ENCODE measurements at regions of chr2 and their contacts with region 1.

Region 1: GRCh38 chr2:15577071-15577735 is 14.5 kb upstream of the DDX1 start:
- DNase-seq: peak; percentile 89
- ATAC-seq: peak; percentile 97
- H3K4me3 ChIP-seq: no peak overlapping the region
- H3K27ac ChIP-seq: no peak overlapping the region
- H3K4me1 ChIP-seq: peaks cover 6% of the 10 kb centered on the region; the same call in 1 of the 2 replicates
- H3K27me3 ChIP-seq: no peaks in the 10 kb centered on the region
- CTCF ChIP-seq: peak; percentile 92

Region 2: DNA sequence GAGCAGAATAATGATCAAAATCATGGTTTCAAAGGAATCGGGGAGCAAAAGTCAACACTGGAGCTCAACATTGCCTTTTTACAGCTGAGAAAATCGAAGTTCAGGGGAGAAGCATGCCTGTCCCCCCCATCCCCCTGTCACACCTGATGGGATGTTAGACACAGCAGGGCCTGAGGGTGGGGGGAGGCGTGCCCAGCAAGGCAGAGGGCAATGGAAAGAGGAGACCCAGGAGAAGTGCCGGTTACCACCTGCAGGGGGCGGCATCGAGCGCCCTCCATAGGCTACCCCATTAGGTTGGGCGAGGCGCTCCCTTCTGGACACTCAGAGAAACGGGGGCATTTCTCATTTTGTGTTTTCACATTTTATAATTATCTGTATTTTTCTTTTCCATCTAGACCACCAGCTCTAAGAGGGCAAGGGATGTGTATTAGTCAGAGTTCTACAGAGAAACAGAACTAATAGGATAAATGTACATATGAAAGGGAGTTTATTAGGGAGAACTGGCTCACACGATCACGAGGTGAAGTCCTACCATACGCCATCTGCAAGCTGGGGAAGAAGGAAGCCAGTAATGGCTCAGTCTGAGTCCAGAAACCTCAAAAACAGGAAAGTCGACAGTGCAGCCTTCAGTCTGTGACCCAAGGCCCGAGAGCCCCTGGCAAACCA is 673.4 kb before region 1 on chr2:
- CTCF ChIA-PET with region 1: no interaction called
- POLR2A ChIA-PET with region 1: no interaction called
- intact Hi-C with region 1: loop called (anchors 5 kb)
- DNase-seq: peak; percentile 79
- ATAC-seq: peak; percentile 82
- H3K4me3 ChIP-seq: no peak overlapping the region
- H3K27ac ChIP-seq: no peak overlapping the region
- H3K4me1 ChIP-seq: peaks cover 4% of the 10 kb centered on the region; the same call in 1 of the 2 replicates
- H3K27me3 ChIP-seq: no peaks in the 10 kb centered on the region
- CTCF ChIP-seq: peak; percentile 95

Region 3: DNA sequence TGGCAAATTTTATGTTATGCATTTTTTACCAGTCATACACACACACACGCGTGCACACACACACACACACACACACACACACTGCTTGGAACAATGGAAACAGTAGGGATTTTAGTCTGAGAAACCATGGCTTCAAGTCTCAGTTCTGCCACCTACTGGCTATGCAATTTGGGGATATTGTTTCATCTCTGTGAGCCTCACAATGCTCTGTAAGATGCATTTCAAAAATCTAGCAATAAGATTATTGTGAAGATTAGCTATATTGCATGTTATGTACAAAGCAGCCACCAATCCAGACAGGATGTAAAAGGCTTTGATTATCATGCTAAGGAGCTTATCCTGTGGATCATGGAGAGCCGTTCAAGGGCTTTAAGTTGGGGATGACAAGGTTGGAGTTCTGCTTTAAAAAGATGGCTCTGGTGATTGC is 417.4 kb before region 1 on chr2:
- CTCF ChIA-PET with region 1: no interaction called
- POLR2A ChIA-PET with region 1: no interaction called
- intact Hi-C with region 1: loop called (anchors 10 kb)
- DNase-seq: peak; percentile 75
- ATAC-seq: peak; percentile 65
- H3K4me3 ChIP-seq: no peak overlapping the region
- H3K27ac ChIP-seq: no peak overlapping the region
- H3K4me1 ChIP-seq: peaks cover 8% of the 10 kb centered on the region
- H3K27me3 ChIP-seq: no peaks in the 10 kb centered on the region
- CTCF ChIP-seq: peak; percentile 79

Region 4: GRCh38 chr2:15435474-15435873 is 141.7 kb before region 1 on chr2:
- CTCF ChIA-PET with region 1: interaction called, 3 read pairs
- POLR2A ChIA-PET with region 1: no interaction called
- intact Hi-C with region 1: loop called (anchors 1 kb)
- DNase-seq: no peak
- ATAC-seq: no peak
- H3K4me3 ChIP-seq: no peak overlapping the region
- H3K27ac ChIP-seq: no peak overlapping the region
- H3K4me1 ChIP-seq: no peaks in the 10 kb centered on the region
- H3K27me3 ChIP-seq: no peaks in the 10 kb centered on the region
- CTCF ChIP-seq: no peak

Region 5: DNA sequence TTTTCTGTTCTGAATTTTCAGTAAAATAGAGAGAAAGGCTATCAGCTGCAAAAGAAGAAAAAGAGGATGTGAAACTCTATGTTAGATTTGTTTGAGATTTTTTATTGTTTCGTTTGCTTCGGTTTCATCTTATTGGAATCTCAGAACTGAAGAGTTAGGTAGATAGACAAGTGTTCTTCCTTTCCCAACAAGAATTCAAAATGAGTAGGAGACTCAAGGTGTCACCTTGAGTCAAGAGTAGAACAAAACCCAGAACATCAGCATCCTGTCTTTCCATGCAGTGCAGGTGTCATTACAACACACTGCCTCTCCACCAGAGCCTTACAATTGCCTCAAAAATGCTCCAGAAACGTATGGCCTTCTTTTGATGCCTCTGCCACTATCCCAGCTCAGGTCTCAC is 37.2 kb before region 1 on chr2:
- CTCF ChIA-PET with region 1: no interaction called
- POLR2A ChIA-PET with region 1: no interaction called
- intact Hi-C with region 1: no loop called
- DNase-seq: no peak
- ATAC-seq: no peak
- H3K4me3 ChIP-seq: no peak overlapping the region
- H3K27ac ChIP-seq: no peak overlapping the region
- H3K4me1 ChIP-seq: no peaks in the 10 kb centered on the region
- H3K27me3 ChIP-seq: no peaks in the 10 kb centered on the region
- CTCF ChIP-seq: no peak

Region 6: DNA sequence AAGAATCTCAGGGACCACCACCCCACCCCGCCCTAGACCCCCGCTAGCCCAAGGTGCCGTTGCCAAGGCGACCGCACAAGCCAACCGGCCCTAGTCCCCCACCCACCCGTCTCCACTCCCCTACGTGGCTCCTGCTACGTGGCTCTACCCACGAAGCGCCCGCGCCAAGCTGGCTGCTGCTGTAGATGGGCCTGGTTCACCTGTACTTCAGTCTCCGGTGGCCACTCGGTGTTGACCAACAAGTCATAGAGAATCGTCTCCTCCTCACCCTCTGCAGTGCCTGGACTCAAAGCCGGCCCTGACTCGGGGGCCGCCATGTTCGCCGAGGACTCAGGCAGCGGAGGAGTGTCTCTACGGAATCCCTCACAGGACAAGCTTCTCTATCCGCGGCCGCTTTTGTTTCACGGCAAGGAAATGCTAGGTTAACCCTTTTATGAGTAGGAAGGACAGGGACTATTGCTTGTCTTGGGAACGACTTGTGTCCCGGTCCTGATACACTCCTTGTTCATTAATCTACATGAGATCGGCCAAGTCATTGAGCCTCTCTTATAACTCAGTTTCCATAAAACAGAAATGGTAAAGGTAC is 16.1 kb before region 1 on chr2 and contains the start of gene NBAS:
- CTCF ChIA-PET with region 1: interaction called, 14 read pairs
- POLR2A ChIA-PET with region 1: no interaction called
- intact Hi-C with region 1: no loop called
- DNase-seq: peak; percentile 86
- ATAC-seq: peak; percentile 75
- H3K4me3 ChIP-seq: peak within 1 kb of the TSS; percentile 98
- H3K27ac ChIP-seq: no peak within 1 kb of the TSS; the same call in 1 of the 2 replicates
- H3K4me1 ChIP-seq: peaks cover 18% of the 10 kb centered on the region; the same call in 1 of the 2 replicates
- H3K27me3 ChIP-seq: no peaks in the 10 kb centered on the region
- CTCF ChIP-seq: no peak
- total RNA-seq, gene NBAS: 37.2 and 45.1 TPM in 2 replicates

Region 7: DNA sequence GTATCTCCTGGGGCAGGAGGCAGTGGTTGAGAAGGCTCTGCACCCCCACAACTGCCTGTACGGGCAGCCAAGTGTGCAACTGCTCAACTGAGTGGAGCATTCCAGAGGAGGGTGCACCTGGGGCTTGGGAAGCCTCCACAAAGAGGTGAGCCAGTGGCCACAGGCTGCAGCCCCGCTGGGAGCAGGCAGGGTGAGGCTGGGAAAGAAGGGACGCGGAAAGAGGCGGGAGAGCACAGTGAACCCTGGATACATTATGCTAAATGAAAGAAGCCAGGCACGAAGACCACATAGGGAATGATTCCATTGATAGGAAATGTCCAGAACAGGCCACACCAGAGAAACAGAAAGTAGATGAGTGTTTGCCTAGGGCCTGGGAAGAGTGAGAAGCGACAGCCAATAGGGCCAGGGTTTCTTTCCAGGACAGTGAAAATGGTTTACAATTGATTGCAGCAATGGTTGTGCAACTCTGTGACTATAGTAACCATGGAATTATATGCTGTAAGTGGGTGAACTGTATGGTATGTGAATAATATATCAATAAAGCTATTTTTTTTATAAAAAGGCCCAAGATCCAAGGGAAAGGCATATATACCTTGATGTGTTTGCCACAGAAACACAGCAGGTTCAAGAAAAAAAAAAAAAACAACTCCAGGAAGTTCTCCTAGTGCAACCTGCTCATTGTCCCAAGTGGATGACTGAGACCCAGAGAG is 96.9 kb after region 1 on chr2:
- CTCF ChIA-PET with region 1: no interaction called
- POLR2A ChIA-PET with region 1: no interaction called
- intact Hi-C with region 1: no loop called
- DNase-seq: no peak
- ATAC-seq: no peak
- H3K4me3 ChIP-seq: no peak overlapping the region
- H3K27ac ChIP-seq: no peak overlapping the region
- H3K4me1 ChIP-seq: no peaks in the 10 kb centered on the region
- H3K27me3 ChIP-seq: peaks cover 49% of the 10 kb centered on the region
- CTCF ChIP-seq: no peak

Region 8: DNA sequence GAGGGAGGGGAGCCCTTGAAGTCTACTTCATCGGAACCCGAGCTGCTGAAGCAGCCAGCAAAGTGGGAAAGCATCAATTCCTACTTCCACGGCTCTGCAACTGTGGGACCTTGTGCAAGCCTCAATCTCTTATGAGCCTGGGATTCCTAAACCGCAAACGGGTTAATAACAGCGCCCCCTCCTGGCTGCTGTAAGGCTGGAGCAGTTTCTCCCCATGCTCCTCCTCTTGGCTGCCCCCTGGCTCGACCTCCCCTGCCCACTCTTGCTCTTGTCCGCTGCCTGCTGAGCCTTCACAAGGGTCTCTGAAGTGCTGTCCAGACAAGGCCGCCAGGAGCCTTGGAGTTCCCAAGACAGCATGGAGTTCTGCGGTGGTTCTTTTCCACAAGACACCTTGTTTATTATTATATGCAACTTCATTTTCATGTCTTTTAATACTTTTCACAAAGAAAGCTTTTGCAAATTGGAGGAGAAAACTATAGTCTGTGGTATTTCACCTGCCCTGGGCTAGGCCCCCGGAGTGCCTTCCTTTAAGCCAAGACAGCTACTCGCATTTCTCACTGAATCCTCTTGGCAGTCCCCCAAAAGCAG is 171.6 kb after region 1 on chr2:
- CTCF ChIA-PET with region 1: no interaction called
- POLR2A ChIA-PET with region 1: no interaction called
- intact Hi-C with region 1: no loop called
- DNase-seq: peak; percentile 33
- ATAC-seq: no peak
- H3K4me3 ChIP-seq: no peak overlapping the region
- H3K27ac ChIP-seq: no peak overlapping the region
- H3K4me1 ChIP-seq: no peaks in the 10 kb centered on the region
- H3K27me3 ChIP-seq: peaks cover 39% of the 10 kb centered on the region
- CTCF ChIP-seq: peak; percentile 53; the same call in 1 of the 2 replicates